Endothelial cell of umbilical vein (primary cell): ENCODE measurements at regions of chr11 and their contacts with region 1.

Region 1: GRCh38 chr11:82639251-82639650 is 94.4 kb downstream of the FAM181B start:
- DNase-seq: no peak
- H3K4me3 ChIP-seq: no peak overlapping the region
- H3K27ac ChIP-seq: no peak overlapping the region
- H3K4me1 ChIP-seq: no peaks in the 10 kb centered on the region
- H3K27me3 ChIP-seq: no peaks in the 10 kb centered on the region
- CTCF ChIP-seq: no peak
- POLR2A ChIP-seq: no peak

Region 2: DNA sequence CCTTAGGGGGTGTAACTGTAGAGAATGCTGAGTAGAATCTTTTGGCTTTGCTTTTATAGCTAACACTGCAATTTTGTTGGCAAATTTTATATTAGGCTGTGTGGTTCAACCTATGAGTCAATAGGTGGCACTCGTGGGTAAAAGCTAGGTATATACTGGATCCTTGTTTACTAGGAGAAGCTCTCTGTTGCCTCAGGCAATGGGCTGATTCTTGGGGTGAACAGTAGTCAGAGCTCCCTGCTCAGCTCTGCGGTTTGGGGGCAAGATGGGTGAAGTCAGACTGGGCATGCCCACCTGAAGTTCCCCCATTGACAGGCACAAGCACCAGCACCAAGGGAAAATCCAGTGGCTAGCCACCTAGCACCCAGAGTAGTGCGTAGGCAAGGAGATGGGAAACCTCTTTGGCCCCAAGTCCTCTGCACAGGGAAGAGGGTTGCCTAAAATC is 144.2 kb before region 1 on chr11:
- CTCF ChIA-PET with region 1: no interaction called
- POLR2A ChIA-PET with region 1: no interaction called
- dilution Hi-C with region 1: no loop called
- intact Hi-C with region 1: no loop called
- DNase-seq: no peak
- H3K4me3 ChIP-seq: no peak overlapping the region
- H3K27ac ChIP-seq: no peak overlapping the region
- H3K4me1 ChIP-seq: no peaks in the 10 kb centered on the region
- H3K27me3 ChIP-seq: no peaks in the 10 kb centered on the region
- CTCF ChIP-seq: no peak
- POLR2A ChIP-seq: no peak

Region 3: GRCh38 chr11:82599836-82600235 is 39.4 kb before region 1 on chr11:
- CTCF ChIA-PET with region 1: no interaction called
- POLR2A ChIA-PET with region 1: no interaction called
- dilution Hi-C with region 1: no loop called
- intact Hi-C with region 1: no loop called
- DNase-seq: no peak
- H3K4me3 ChIP-seq: no peak overlapping the region
- H3K27ac ChIP-seq: no peak overlapping the region
- H3K4me1 ChIP-seq: no peaks in the 10 kb centered on the region
- H3K27me3 ChIP-seq: no peaks in the 10 kb centered on the region
- CTCF ChIP-seq: no peak
- POLR2A ChIP-seq: no peak

Region 4: GRCh38 chr11:82676473-82677094 is 37.3 kb after region 1 on chr11:
- CTCF ChIA-PET with region 1: no interaction called
- POLR2A ChIA-PET with region 1: no interaction called
- dilution Hi-C with region 1: no loop called
- intact Hi-C with region 1: loop called (anchors 1 kb)
- DNase-seq: no peak
- H3K4me3 ChIP-seq: no peak overlapping the region
- H3K27ac ChIP-seq: no peak overlapping the region
- H3K4me1 ChIP-seq: no peaks in the 10 kb centered on the region
- H3K27me3 ChIP-seq: no peaks in the 10 kb centered on the region
- CTCF ChIP-seq: peak; percentile 19 to 35
- POLR2A ChIP-seq: no peak